ENCODE measurements at regions of chr17 and their contacts with region 1.

Region 1: DNA sequence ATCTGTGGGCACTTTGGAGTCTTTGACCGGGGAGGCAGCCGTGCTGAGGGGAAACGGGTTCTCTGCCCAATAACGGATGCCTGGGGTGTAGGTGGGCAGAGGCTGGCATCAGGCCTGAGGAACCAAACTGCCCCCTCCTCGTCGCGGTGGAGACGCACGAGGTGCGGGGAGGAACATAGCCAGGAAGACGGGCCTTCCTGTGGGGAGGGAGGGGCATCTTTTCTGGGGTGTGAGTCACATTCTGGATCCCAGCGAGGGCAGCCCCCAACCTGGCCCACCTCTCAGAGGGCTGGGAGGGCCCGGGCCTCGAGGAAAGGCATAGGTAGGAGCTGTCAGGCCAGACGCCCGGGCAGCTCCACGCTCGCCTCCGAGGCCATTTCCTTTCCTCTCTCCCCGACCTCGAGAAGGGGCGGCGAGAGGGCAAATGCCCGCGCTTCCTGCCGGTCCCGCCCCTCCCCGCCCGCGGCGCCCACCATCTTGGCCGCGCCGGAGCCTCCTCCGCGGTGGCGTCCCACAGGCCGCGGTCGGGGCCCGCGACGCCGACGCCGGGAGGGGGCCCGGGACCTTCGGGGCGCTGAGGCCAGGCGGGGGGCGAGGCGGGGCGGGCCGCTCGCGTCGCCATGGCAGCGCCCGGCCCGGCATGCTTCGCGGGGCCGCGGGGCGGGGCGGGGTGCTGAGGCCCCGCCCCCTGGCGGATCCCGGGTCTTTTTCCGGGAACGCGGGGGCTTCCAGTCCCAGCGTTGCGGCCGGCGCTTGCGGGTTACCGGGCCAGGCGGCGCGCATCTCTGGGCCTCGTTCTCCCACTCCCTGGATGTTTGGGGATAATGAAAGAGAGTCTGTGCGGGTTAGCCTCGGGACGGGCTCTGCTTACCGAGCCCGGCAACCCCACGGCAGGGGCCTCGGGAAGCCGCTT is 13.2 kb downstream of the RAI1 start:
- DNase-seq: peak; percentile 45
- ATAC-seq: peak; percentile 35
- H3K4me3 ChIP-seq: peak overlapping the region; percentile 74 to 87 (median 80)
- H3K27ac ChIP-seq: peak overlapping the region; percentile 93
- H3K4me1 ChIP-seq: peaks cover 71% of the 10 kb centered on the region
- H3K27me3 ChIP-seq: no peaks in the 10 kb centered on the region; a peak in 1 of 5 replicates
- CTCF ChIP-seq: no peak
- EP300 ChIP-seq: no peak
- POLR2A ChIP-seq: peak; percentile 55 to 70
- RAD21 ChIP-seq: no peak; the same call in none of the 2 replicates

Region 2: GRCh38 chr17:17681187-17681848 is 13.1 kb before region 1 on chr17 and contains the start of gene RAI1:
- CTCF ChIA-PET with region 1: no interaction called
- POLR2A ChIA-PET with region 1: interaction called, 40 read pairs
- in situ Hi-C with region 1: no loop called
- intact Hi-C with region 1: no loop called
- DNase-seq: peak; percentile 56
- ATAC-seq: peak; percentile 68
- H3K4me3 ChIP-seq: peak within 1 kb of the TSS; percentile 90 to 96 (median 95)
- H3K27ac ChIP-seq: peak within 1 kb of the TSS; percentile 82
- H3K4me1 ChIP-seq: peaks cover 59% of the 10 kb centered on the region
- H3K27me3 ChIP-seq: no peaks in the 10 kb centered on the region; a peak in 1 of 5 replicates
- CTCF ChIP-seq: peak; percentile 64
- EP300 ChIP-seq: no peak
- POLR2A ChIP-seq: no peak; a peak in 1 of 4 replicates
- RAD21 ChIP-seq: peak; percentile 99
- total RNA-seq, gene RAI1: 5.1 and 5.2 TPM in 2 replicates

Region 3: GRCh38 chr17:17706140-17707060 is 12.0 kb after region 1 on chr17:
- CTCF ChIA-PET with region 1: no interaction called
- POLR2A ChIA-PET with region 1: interaction called, 45 read pairs
- in situ Hi-C with region 1: no loop called
- intact Hi-C with region 1: loop called (anchors 2 kb)
- DNase-seq: no peak
- ATAC-seq: peak; percentile 39
- H3K4me3 ChIP-seq: no peak overlapping the region; a peak in 1 of 6 replicates
- H3K27ac ChIP-seq: no peak overlapping the region
- H3K4me1 ChIP-seq: peaks cover 87% of the 10 kb centered on the region
- H3K27me3 ChIP-seq: no peaks in the 10 kb centered on the region
- CTCF ChIP-seq: peak; percentile 12; the same call in 1 of the 2 replicates
- EP300 ChIP-seq: no peak
- POLR2A ChIP-seq: no peak
- RAD21 ChIP-seq: no peak

Region 4: GRCh38 chr17:17712268-17712924 is 18.0 kb after region 1 on chr17:
- CTCF ChIA-PET with region 1: no interaction called
- POLR2A ChIA-PET with region 1: interaction called, 45 read pairs
- in situ Hi-C with region 1: no loop called
- intact Hi-C with region 1: loop called (anchors 2 kb)
- DNase-seq: no peak
- ATAC-seq: no peak
- H3K4me3 ChIP-seq: no peak overlapping the region
- H3K27ac ChIP-seq: peak overlapping the region; percentile 61
- H3K4me1 ChIP-seq: peaks cover 94% of the 10 kb centered on the region
- H3K27me3 ChIP-seq: no peaks in the 10 kb centered on the region
- CTCF ChIP-seq: no peak
- EP300 ChIP-seq: no peak
- POLR2A ChIP-seq: no peak
- RAD21 ChIP-seq: no peak